H1 (cell line): ENCODE measurements at regions of chr2 and their contacts with region 1.

Region 1: GRCh38 chr2:230847883-230848388 is 16.8 kb upstream of the ITM2C start:
- DNase-seq: peak; percentile 84 to 99
- H3K4me3 ChIP-seq: no peak overlapping the region
- H3K27ac ChIP-seq: no peak overlapping the region
- H3K4me1 ChIP-seq: peaks cover 0 to 5% (median 0%) of the 10 kb centered on the region in 4 experiments; a peak in 1 of 7 replicates
- H3K27me3 ChIP-seq: no peaks in the 10 kb centered on the region; a peak in 1 of 7 replicates
- CTCF ChIP-seq: peak; percentile 72 to 92 (median 91)
- EP300 ChIP-seq: 0 out of 3 replicates have a peak, but pooled peaks of 1 of the 2 experiments have one; percentile 23
- POLR2A ChIP-seq: no peak
- RAD21 ChIP-seq: peak; percentile 62 to 78

Region 2: DNA sequence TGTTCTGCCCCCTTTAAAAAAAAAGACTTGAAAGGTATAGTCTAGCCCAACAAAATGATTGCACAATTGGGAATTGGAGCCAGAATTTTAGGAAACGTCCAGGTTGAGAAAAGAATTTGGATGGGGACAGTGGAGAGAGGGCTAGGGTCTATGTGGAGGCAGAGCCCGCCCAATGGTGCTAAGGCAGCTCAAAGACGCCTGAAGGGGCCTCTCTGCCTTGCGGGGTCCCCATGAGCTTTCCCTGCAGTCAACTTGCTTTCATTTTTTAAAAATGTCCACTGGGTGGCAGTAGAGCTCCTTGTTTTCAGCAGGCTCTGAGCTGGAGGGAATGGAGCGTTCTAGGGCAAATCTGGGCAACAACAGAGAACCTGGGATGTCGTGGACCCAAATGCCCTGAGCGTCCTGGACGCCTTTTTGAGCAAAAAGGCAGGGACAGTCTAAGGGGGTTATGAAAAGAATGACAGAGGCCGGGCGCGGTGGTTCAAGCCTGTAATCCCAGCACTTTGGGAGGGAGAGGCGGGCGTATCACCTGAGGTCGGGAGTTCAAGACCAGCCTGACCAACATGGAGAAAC is 23.4 kb before region 1 on chr2:
- CTCF ChIA-PET with region 1: interaction called, 56 read pairs
- POLR2A ChIA-PET with region 1: no interaction called
- DNase-seq: peak; percentile 60 to 66
- H3K4me3 ChIP-seq: no peak overlapping the region
- H3K27ac ChIP-seq: no peak overlapping the region
- H3K4me1 ChIP-seq: peaks cover 0 to 6% (median 2%) of the 10 kb centered on the region in 4 experiments; a peak in 4 of 7 replicates
- H3K27me3 ChIP-seq: no peaks in the 10 kb centered on the region; a peak in 2 of 7 replicates
- CTCF ChIP-seq: peak; percentile 8 to 90 (median 72)
- EP300 ChIP-seq: no peak
- POLR2A ChIP-seq: no peak
- RAD21 ChIP-seq: peak; percentile 92

Region 3: DNA sequence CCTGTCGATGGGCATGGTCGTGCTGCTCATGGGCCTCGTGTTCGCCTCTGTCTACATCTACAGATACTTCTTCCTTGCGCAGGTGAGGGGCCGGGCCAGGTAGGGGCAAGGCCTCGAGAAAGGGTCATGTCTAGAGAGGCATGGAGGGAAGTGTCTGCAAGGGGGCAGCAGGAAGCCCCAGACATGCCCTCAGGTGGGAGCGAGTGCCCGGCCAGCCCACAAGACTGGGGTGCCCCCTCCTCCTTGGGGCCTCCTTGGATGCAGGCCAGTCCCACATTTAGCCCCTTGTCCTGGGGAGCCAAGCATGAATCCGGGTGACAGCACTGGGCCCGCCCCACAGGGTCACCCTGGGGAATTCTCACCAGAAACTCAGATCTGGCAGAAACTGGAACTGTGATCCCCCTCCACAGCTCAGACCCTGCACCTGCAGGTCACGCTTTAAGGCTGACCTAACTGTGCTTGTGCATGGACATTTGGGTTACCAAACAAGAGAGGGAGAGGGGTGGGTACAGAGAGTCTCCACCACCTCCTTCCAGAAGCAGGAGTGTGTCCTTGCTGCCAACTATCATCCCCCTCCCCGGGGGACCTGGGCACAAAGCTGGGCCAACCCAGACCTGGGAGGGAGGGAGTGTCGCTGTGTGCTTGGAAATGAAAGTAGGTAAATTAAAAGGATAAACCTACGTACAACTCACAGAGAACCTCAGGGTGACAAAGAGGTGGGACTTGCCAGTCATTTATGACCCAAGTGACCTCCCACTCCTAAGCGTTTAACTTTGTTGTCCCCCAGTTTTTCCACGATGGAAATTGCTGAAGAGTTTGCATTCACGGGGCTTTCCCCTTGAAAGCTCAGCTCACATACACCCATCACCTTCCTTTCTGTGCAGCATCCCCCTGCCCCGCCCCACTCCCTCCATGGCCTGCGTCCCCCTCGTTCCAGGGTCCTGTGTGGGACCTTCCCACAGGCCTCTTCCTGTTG is 25.8 kb after region 1 on chr2:
- CTCF ChIA-PET with region 1: interaction called, 86 read pairs
- POLR2A ChIA-PET with region 1: interaction called, 10 read pairs
- DNase-seq: peak in 1 of 2 experiments; percentile 41
- H3K4me3 ChIP-seq: no peak overlapping the region
- H3K27ac ChIP-seq: no peak overlapping the region; the same call in 1 of the 2 replicates
- H3K4me1 ChIP-seq: peaks cover 17 to 33% (median 30%) of the 10 kb centered on the region in 4 experiments
- H3K27me3 ChIP-seq: no peaks in the 10 kb centered on the region
- CTCF ChIP-seq: no peak
- EP300 ChIP-seq: no peak
- POLR2A ChIP-seq: no peak
- RAD21 ChIP-seq: no peak

Region 4: DNA sequence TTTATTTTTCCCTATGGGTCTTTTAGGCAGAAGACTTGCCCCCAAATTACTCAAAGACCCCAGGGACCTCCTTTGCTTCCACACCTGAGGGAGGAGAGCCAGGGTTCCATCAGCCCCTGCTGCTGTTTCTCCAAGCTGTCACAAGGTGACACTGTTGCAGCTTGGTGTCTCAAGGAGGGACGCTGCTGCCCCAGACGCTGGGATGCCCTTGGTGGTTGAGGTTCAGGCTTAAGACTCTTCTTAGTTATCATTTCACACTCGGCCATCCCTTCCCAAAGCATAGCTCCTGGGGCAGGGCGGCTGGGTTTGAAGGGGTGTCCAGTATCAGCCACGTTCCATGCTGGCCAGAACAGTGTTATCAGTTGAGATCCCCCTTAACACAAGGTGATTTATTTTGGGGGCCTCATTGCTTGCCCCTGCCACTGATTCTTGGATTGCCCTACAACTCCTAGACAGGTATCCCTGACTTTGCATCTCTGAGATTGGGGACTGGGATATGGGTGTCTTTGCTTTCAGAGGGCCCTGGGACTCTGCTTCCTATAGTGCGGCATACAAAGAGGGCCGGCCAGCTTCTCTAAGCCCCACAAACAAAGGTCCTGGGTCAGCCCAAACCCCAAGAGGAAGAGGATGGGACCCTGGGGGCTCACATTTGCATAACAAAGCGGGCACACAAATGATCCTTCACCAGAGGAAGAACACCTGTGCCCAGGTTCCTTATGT is 54.4 kb after region 1 on chr2:
- CTCF ChIA-PET with region 1: interaction called, 15 read pairs
- POLR2A ChIA-PET with region 1: no interaction called
- DNase-seq: peak; percentile 51 to 78
- H3K4me3 ChIP-seq: peak overlapping the region in 2 of 4 experiments; percentile 42 to 46; a peak in 3 of 8 replicates
- H3K27ac ChIP-seq: peak overlapping the region; percentile 75
- H3K4me1 ChIP-seq: peaks cover 7 to 32% (median 18%) of the 10 kb centered on the region in 4 experiments
- H3K27me3 ChIP-seq: peaks cover 0 to 13% (median 0%) of the 10 kb centered on the region in 4 experiments; a peak in 3 of 7 replicates
- CTCF ChIP-seq: peak; percentile 90 to 97 (median 91)
- EP300 ChIP-seq: peak in 1 of 2 experiments; percentile 67; a peak in 1 of 3 replicates
- POLR2A ChIP-seq: peak in 1 of 2 experiments; percentile 31; a peak in 1 of 3 replicates
- RAD21 ChIP-seq: peak; percentile 91 to 94

Region 5: GRCh38 chr2:230924470-230925341 is 76.8 kb after region 1 on chr2 and contains the start of gene GPR55:
- CTCF ChIA-PET with region 1: interaction called, 25 read pairs
- POLR2A ChIA-PET with region 1: no interaction called
- DNase-seq: peak in 1 of 2 experiments; percentile 83
- H3K4me3 ChIP-seq: no peak within 1 kb of the TSS
- H3K27ac ChIP-seq: no peak within 1 kb of the TSS
- H3K4me1 ChIP-seq: peaks cover 0 to 3% (median 2%) of the 10 kb centered on the region in 4 experiments; a peak in 2 of 7 replicates
- H3K27me3 ChIP-seq: no peaks in the 10 kb centered on the region
- CTCF ChIP-seq: peak; percentile 61 to 78 (median 73)
- EP300 ChIP-seq: no peak
- POLR2A ChIP-seq: no peak
- RAD21 ChIP-seq: peak; percentile 66 to 76
- total RNA-seq, gene GPR55: not detected in 2 replicates

Region 6: DNA sequence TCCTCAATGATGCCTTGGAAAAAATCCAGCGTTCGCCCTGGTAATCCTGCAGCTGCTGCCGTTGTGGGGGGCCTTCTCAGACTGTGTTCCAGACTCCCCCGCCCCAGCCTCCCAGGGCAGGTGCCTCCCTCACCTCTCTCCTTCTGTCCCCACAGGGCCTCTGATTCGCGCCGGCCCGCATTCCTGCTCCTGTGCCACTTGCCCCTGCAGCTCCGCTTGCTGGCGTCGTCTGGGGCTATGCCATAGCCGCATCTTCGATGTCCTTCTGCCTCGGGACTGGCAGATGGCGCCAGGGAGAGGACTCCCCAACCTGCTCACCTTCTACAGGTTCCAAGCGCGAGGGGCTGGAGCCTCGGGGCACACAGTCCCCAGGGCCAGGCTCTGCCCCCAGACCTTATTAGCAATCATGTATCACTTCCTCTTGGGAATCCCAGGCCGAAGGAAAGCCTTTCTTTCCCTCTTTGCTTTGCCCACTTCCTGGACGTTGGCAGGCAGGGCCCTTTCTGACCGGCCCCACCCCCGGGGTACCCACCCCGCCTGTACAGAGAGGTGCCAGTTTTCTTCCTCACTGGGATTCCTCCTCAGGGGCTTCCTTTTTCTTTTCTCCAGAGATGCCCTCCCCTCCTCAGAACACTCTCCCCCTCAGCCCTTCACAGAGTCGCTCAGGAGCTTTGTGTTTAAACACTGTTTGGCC is 152.4 kb after region 1 on chr2:
- CTCF ChIA-PET with region 1: interaction called, 13 read pairs
- POLR2A ChIA-PET with region 1: no interaction called
- DNase-seq: peak; percentile 60 to 70
- H3K4me3 ChIP-seq: no peak overlapping the region
- H3K27ac ChIP-seq: no peak overlapping the region
- H3K4me1 ChIP-seq: no peaks in the 10 kb centered on the region; a peak in 2 of 7 replicates
- H3K27me3 ChIP-seq: peaks cover 0 to 6% (median 3%) of the 10 kb centered on the region in 4 experiments; a peak in 3 of 7 replicates
- CTCF ChIP-seq: peak; percentile 67 to 80 (median 69)
- EP300 ChIP-seq: no peak
- POLR2A ChIP-seq: no peak
- RAD21 ChIP-seq: peak; percentile 61 to 73; a peak in 3 of 4 replicates